HEK293 (cell line): ENCODE measurements at regions of chr7 and their contacts with region 1.

Region 1: GRCh38 chr7:27143023-27143949 is at the start of gene HOXA5:
- H3K4me3 ChIP-seq: peak within 1 kb of the TSS; percentile 79
- H3K27ac ChIP-seq: peak within 1 kb of the TSS; percentile 98
- H3K4me1 ChIP-seq: peaks cover 22% of the 10 kb centered on the region
- CTCF ChIP-seq: peak; percentile 84

Region 2: DNA sequence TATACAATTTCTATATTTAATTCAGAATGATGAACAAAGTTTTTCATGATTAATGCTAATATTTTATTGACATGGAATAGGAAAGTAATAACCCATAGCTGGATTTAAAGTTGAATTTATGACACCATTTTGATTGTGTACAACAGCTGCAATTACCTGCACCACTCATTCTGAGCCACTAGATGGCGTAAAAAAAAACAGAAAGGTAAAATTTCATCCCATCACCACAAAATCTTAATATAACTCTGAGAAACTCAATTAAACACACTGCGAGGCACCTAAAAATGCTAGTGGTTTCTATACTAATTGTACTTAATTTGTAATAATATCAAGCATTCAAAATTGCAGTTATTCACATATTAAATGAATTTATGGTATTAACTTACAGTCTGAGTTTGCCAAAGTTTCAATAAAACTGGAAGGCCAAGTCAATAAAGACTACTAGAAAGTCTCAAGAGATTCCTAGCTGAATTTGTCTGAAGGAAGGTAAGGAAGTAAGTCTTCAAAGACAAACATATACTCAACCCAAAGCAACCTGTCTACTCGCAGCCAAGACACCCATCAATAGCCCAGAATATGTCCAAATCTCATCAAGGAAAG is 461.4 kb before region 1 on chr7:
- CTCF ChIA-PET with region 1: interaction called, 29 read pairs
- POLR2A ChIA-PET with region 1: interaction called, 3 read pairs
- H3K4me3 ChIP-seq: no peak overlapping the region
- H3K27ac ChIP-seq: no peak overlapping the region
- H3K4me1 ChIP-seq: peaks cover 33% of the 10 kb centered on the region
- CTCF ChIP-seq: no peak

Region 3: DNA sequence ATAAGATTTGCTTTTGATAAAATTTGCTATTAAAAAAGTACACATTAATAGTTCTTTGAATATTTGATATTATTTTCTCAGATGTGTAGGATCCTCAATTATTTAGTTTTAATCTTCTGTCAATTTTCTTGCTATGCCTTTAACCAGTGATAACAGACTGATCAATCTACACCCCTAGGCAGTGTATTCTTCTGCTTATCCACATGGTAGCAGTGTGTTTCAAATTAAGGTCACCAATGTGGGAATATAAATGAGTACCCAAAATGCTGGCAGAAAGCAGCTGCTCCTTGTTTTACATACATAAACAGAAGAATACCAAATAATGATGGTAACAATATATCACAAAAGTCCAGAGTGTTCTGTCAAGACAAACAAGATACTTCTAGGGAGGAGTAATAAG is 365.9 kb before region 1 on chr7:
- CTCF ChIA-PET with region 1: no interaction called
- POLR2A ChIA-PET with region 1: no interaction called
- H3K4me3 ChIP-seq: no peak overlapping the region
- H3K27ac ChIP-seq: no peak overlapping the region
- H3K4me1 ChIP-seq: peaks cover 8% of the 10 kb centered on the region; the same call in 1 of the 2 replicates
- CTCF ChIP-seq: no peak

Region 4: DNA sequence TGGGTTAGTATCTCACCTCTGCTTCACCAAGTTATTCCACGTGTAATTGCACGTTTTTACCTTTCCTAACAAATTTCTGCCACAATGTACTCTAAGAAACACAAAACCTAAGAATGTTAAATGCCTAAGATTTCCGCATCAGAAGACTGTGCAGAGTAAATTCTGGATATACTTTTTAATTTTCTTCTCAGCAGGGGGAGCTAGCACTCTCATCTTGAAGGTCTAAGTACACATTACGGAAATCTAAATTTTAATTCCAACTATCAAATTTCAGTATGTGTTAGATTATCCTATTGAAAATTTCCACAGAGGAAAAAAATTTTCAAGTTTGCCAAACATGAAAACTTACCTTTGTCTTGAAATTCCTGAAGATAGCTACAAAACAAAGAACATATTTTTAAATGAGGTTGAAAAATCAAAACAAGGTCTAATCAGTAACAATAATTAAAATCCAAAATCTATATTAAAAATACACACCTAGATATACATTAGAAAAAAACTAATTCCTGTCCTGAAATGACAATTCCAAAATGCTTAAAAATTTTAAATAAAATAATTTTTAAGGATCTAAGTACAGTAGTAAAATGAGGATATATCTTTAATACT is 289.4 kb before region 1 on chr7:
- CTCF ChIA-PET with region 1: interaction called, 34 read pairs
- POLR2A ChIA-PET with region 1: interaction called, 3 read pairs
- H3K4me3 ChIP-seq: no peak overlapping the region
- H3K27ac ChIP-seq: no peak overlapping the region
- H3K4me1 ChIP-seq: peaks cover 42% of the 10 kb centered on the region
- CTCF ChIP-seq: no peak

Region 5: DNA sequence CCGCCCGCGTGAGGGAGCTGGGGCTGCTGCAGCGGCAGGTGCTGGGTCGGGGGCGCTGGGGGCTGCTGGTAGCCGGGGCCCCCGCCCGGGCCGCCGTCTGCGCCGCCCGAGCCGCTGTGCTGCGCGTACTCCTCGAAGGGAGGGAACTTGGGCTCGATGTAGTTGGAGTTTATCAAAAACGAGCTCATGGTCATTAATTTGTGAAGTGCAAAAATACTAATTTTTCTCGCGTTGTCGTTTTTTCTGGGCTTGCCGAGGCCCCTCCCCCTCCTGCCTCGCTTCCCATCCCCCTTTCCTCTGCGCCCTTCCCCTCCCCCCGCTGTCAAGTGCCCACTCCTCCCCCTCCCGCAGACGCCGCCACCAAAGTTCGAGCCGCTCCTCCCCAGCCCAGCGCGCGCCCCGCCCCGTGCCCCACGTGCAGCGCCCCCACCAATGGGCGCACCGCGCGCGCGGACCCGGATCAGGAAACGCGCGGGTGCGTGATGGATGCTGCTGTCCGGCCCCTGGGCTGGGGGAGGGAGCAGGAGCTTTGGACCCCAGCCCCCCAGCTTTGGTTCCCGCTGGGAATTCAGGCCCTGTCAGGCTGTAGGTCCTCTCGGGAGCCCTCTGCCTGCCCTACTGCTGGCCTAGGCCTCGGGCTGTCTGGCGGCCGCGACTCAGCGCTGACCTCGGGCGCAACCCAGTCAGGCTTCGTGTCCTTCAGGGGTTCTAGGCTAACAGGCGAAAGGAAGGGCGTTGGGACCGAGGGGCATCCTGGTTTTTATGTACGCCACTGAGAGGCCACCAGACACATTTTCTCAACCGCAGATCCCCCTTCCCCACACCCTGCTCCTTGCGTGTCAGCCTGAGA is 12.5 kb before region 1 on chr7 and contains the start of gene HOXA4:
- CTCF ChIA-PET with region 1: interaction called, 12 read pairs
- POLR2A ChIA-PET with region 1: interaction called, 9 read pairs
- H3K4me3 ChIP-seq: peak within 1 kb of the TSS; percentile 52
- H3K27ac ChIP-seq: peak within 1 kb of the TSS; percentile 100
- H3K4me1 ChIP-seq: peaks cover 78% of the 10 kb centered on the region
- CTCF ChIP-seq: no peak; the same call in 1 of the 2 replicates

Region 6: GRCh38 chr7:27160546-27161213 is 17.4 kb after region 1 on chr7:
- CTCF ChIA-PET with region 1: interaction called, 50 read pairs
- POLR2A ChIA-PET with region 1: interaction called, 42 read pairs
- H3K4me3 ChIP-seq: peak overlapping the region; percentile 46
- H3K27ac ChIP-seq: peak overlapping the region; percentile 100
- H3K4me1 ChIP-seq: peaks cover 12% of the 10 kb centered on the region
- CTCF ChIP-seq: peak; percentile 88

Region 7: DNA sequence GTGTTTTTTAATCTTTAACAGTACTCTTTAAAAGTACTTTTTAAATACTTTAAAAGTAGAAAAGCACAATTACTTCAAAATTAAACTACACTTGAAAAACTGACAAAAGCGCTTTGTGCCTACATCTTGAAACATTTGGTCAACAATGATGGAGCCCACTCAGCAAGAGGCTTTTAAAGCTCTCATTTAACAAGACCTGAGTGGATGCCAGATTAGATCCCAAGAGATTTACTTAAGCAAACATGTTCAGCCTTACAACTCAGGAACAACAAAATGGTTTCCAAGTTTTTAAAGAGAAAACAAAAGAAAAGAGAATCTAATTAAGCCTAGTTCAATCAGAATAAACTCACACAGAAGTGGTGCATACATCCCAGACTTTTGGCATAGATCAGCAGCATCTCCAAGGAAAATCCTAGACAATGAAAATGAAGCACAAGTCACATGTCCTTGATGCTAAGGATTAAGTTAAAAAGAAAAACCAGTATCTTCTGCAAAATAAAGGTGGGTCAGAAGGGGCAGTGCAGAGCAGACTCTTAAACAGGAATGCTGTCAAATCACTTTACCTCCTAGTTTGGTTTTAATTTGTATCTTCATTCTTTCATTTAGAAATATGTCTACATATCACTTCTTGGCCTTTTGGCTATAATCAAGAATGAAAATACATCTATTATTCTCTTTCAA is 493.2 kb after region 1 on chr7:
- CTCF ChIA-PET with region 1: no interaction called
- POLR2A ChIA-PET with region 1: no interaction called
- H3K4me3 ChIP-seq: no peak overlapping the region
- H3K27ac ChIP-seq: no peak overlapping the region
- H3K4me1 ChIP-seq: peaks cover 25% of the 10 kb centered on the region
- CTCF ChIP-seq: no peak